ENCODE measurements at regions of chr2 and their contacts with region 1.

Region 1: DNA sequence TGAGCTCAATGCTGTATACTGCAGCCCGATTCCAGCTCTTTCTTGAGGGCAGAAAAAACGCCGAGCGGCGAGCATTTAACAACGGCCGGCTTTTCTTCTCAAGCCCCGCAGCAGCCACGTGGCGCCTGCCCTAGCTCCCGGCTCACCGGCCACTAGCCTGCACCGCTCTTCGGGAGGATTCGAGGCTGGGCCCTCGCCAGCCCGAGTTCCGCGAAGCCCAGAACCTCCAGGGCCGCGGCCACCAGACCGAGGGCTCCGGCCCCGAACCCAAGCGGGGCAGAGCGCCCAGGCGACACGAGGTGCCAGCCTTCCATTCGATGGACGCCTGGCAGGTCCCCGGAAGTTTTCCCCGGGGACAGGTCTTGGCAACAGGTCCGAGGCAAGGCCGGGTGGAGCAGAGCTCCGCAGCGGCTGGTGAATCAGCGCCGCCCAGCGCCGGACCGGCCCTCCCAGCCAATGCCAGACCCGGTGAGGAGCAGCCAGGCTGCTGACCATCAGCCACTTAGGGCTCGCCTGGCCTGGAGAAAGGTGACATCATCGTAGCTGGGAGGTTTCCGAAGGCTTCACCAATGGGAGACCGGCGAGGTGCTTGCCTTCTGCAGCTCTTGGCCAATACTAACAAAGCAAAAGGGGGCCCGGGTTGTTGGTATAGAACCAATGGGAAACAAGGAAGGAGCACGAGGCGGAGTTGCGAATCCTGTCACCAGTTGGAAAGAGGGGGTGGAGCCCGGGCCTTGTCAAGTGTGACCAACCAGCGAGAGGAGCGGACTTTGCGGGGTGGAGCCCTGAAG is 544 bp upstream of the MXD1 start:
- DNase-seq: peak; percentile 99 to 100 (median 100)
- H3K4me3 ChIP-seq: peak overlapping the region; percentile 81 to 88
- H3K4me3 Mint-ChIP-seq: peak overlapping the region; percentile 85 to 89 (median 87)
- H3K27ac ChIP-seq: peak overlapping the region; percentile 96
- H3K27ac Mint-ChIP-seq: peak overlapping the region; percentile 90 to 96 (median 94)
- H3K4me1 ChIP-seq: peaks cover 30% of the 10 kb centered on the region
- H3K4me1 Mint-ChIP-seq: peaks cover 7 to 44% (median 19%) of the 10 kb centered on the region in 4 donors
- H3K27me3 ChIP-seq: no peaks in the 10 kb centered on the region
- H3K27me3 Mint-ChIP-seq: no peaks in the 10 kb centered on the region

Region 2: DNA sequence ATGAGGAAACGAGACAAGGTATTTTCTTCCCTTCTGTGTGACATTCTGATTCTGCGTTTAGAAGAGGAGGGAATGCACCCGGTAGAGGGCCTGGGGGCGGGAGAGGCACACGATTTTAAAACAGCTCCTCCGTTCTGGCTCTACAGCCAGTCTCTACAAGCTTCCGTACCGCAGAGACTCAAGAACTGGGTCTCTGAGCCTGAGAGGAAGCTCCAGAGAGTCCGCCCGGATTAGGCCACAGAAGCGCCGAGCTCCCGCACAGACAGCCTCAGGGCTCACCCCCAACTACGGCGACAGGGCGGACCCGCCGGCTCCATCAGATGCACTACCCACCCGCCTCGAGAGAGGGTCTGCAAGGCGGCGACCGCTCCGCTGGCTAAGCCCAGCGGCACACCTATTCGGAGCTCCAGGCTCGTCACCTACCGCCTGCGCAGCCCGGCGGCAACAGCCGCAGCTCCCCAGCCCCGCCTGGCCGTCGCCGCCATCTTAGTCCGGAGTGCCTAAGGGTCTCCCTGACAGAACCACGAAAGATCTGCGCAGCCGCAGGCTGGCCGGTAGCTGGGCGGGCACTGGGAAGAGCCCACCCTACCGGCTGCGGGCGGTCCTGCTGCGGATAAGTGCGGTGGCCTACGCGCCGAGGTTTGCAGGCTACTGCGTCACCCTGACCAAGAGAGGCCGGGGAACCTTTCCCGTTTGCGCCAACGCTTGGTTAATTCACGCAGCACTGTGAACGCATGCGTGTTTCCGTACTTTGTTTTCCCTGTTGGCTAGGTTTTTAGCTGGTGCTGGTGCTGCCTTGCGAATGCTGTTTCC is 477.2 kb before region 1 on chr2 and contains the start of gene NFU1:
- CTCF ChIA-PET with region 1: interaction called, 3 read pairs
- POLR2A ChIA-PET with region 1: interaction called, 10 read pairs
- intact Hi-C with region 1: no loop called
- DNase-seq: peak; percentile 85 to 91 (median 89)
- H3K4me3 ChIP-seq: peak within 1 kb of the TSS; percentile 75 to 82
- H3K4me3 Mint-ChIP-seq: peak within 1 kb of the TSS; percentile 93 to 99 (median 98)
- H3K27ac ChIP-seq: peak within 1 kb of the TSS; percentile 91
- H3K27ac Mint-ChIP-seq: peak within 1 kb of the TSS; percentile 98 to 100 (median 99)
- H3K4me1 ChIP-seq: peaks cover 32% of the 10 kb centered on the region
- H3K4me1 Mint-ChIP-seq: peaks cover 26 to 48% (median 34%) of the 10 kb centered on the region in 4 donors
- H3K27me3 ChIP-seq: no peaks in the 10 kb centered on the region
- H3K27me3 Mint-ChIP-seq: no peaks in the 10 kb centered on the region
- total RNA-seq, gene NFU1: 23.9 to 27.0 TPM

Region 3: GRCh38 chr2:69704446-69704845 is 209.9 kb before region 1 on chr2:
- CTCF ChIA-PET with region 1: no interaction called
- POLR2A ChIA-PET with region 1: no interaction called
- intact Hi-C with region 1: no loop called
- DNase-seq: no peak
- H3K4me3 ChIP-seq: no peak overlapping the region
- H3K4me3 Mint-ChIP-seq: no peak overlapping the region
- H3K27ac ChIP-seq: no peak overlapping the region
- H3K27ac Mint-ChIP-seq: no peak overlapping the region
- H3K4me1 ChIP-seq: peaks cover under 1% of the 10 kb centered on the region
- H3K4me1 Mint-ChIP-seq: peaks cover 9 to 15% (median 9%) of the 10 kb centered on the region in 4 donors
- H3K27me3 ChIP-seq: no peaks in the 10 kb centered on the region
- H3K27me3 Mint-ChIP-seq: no peaks in the 10 kb centered on the region

Region 4: GRCh38 chr2:70062268-70062667 is 147.9 kb after region 1 on chr2:
- CTCF ChIA-PET with region 1: interaction called, 81 read pairs
- POLR2A ChIA-PET with region 1: interaction called, 129 read pairs
- intact Hi-C with region 1: no loop called
- DNase-seq: no peak
- H3K4me3 ChIP-seq: no peak overlapping the region
- H3K4me3 Mint-ChIP-seq: no peak overlapping the region
- H3K27ac ChIP-seq: no peak overlapping the region
- H3K27ac Mint-ChIP-seq: peak overlapping the region in 2 of 7 donors; percentile 46 to 55
- H3K4me1 ChIP-seq: peaks cover 10% of the 10 kb centered on the region
- H3K4me1 Mint-ChIP-seq: peaks cover 9 to 24% (median 17%) of the 10 kb centered on the region in 4 donors
- H3K27me3 ChIP-seq: no peaks in the 10 kb centered on the region
- H3K27me3 Mint-ChIP-seq: no peaks in the 10 kb centered on the region

Region 5: GRCh38 chr2:70086838-70087701 is 172.7 kb after region 1 on chr2 and contains the start of gene PCBP1:
- CTCF ChIA-PET with region 1: interaction called, 51 read pairs
- POLR2A ChIA-PET with region 1: interaction called, 207 read pairs
- intact Hi-C with region 1: loop called (anchors 1 kb)
- DNase-seq: peak; percentile 93 to 99 (median 97)
- H3K4me3 ChIP-seq: peak within 1 kb of the TSS; percentile 74 to 84
- H3K4me3 Mint-ChIP-seq: peak within 1 kb of the TSS; percentile 93 to 99 (median 96)
- H3K27ac ChIP-seq: peak within 1 kb of the TSS; percentile 99
- H3K27ac Mint-ChIP-seq: peak within 1 kb of the TSS; percentile 99 to 100 (median 100)
- H3K4me1 ChIP-seq: peaks cover 68% of the 10 kb centered on the region
- H3K4me1 Mint-ChIP-seq: peaks cover 47 to 93% (median 59%) of the 10 kb centered on the region in 4 donors
- H3K27me3 ChIP-seq: no peaks in the 10 kb centered on the region
- H3K27me3 Mint-ChIP-seq: peaks cover 3% of the 10 kb centered on the region in 2 donors
- total RNA-seq, gene PCBP1: 372 to 383 TPM

Region 6: GRCh38 chr2:70124983-70125480 is 210.7 kb after region 1 on chr2:
- CTCF ChIA-PET with region 1: interaction called, 4 read pairs
- POLR2A ChIA-PET with region 1: interaction called, 81 read pairs
- intact Hi-C with region 1: no loop called
- DNase-seq: peak in 2 of 5 donors; percentile 75 to 82
- H3K4me3 ChIP-seq: peak overlapping the region; percentile 29 to 99
- H3K4me3 Mint-ChIP-seq: peak overlapping the region; percentile 89 to 99 (median 94)
- H3K27ac ChIP-seq: peak overlapping the region; percentile 97
- H3K27ac Mint-ChIP-seq: peak overlapping the region; percentile 95 to 100 (median 100)
- H3K4me1 ChIP-seq: peaks cover 64% of the 10 kb centered on the region
- H3K4me1 Mint-ChIP-seq: peaks cover 34 to 73% (median 57%) of the 10 kb centered on the region in 4 donors
- H3K27me3 ChIP-seq: no peaks in the 10 kb centered on the region
- H3K27me3 Mint-ChIP-seq: peaks cover 0 to 3% of the 10 kb centered on the region in 2 donors

Region 7: DNA sequence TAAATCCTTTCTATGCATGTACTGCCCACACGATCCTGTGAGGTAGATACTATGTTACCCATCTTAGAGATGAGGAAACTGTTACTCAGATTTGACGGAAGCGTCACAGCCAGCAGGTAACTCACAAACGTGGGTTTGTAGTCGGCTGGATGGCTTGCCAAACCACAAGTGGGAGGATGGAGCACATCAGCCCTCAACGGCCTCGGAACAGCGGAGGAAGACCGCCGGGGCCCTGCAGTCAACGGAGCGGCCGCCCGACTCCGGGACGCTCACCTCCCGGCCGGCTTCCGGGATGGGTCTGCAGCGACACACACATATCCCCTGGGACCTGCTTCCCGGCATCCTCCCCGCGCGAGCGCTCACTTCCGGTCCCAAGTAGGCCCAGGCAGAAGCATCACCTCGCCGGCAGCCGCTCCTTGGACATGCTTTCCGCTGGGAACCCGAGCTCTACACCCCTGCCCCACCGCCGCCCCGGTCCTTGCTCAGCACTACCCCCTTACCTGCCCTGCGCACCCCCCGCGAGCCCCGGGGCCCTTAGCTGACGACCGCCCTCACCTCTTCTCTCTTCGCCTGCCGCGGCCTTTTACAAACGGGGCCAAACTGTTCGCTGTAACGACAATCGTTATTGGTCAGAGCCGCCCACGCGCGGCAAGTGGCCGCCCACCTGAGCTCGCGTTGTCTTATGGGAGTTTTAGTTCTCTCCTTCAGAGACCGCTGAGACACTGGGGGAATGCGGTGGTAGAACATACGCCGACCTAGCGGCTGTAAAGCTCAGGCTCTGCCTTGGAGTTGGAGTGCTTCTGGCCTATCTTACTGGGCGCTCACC is 276.3 kb after region 1 on chr2 and contains the start of gene C2orf42:
- CTCF ChIA-PET with region 1: interaction called, 35 read pairs
- POLR2A ChIA-PET with region 1: interaction called, 85 read pairs
- intact Hi-C with region 1: loop called (anchors 1 kb)
- DNase-seq: peak; percentile 96 to 97 (median 97)
- H3K4me3 ChIP-seq: peak within 1 kb of the TSS; percentile 93 to 96
- H3K4me3 Mint-ChIP-seq: peak within 1 kb of the TSS; percentile 90 to 98 (median 96)
- H3K27ac ChIP-seq: peak within 1 kb of the TSS; percentile 81
- H3K27ac Mint-ChIP-seq: peak within 1 kb of the TSS; percentile 98 to 100 (median 99)
- H3K4me1 ChIP-seq: peaks cover 15% of the 10 kb centered on the region
- H3K4me1 Mint-ChIP-seq: peaks cover 15 to 25% (median 20%) of the 10 kb centered on the region in 4 donors
- H3K27me3 ChIP-seq: no peaks in the 10 kb centered on the region
- H3K27me3 Mint-ChIP-seq: peaks cover 0 to 1% of the 10 kb centered on the region in 2 donors
- total RNA-seq, gene C2orf42: 36.7 to 47.9 TPM

Region 8: DNA sequence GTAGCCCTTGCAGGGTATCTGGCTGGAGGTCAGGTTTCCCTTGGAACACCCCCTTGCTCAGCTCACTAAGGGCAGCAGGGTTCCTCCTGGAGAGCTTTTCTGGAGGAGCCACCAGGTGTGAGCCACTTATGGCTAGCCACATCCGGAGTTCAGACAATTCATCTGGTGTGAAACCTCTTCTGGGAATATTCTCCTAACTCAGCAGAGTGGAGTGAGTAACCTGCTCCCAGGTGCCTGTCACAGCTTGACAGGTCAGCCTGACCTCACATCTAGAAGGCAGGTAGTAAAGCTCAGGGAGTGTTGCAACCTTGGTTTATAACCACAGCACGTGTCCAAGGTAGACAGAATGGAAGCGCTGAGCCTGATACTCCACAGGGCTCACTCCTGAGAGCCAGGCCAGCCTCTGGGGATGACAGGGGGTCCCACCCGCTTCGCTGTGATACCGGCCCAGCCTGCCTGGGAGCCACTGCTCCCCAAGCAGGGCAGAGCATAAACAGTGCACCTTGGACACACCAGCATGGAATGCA is 701.9 kb after region 1 on chr2:
- CTCF ChIA-PET with region 1: no interaction called
- POLR2A ChIA-PET with region 1: no interaction called
- intact Hi-C with region 1: loop called (anchors 10 kb)
- DNase-seq: no peak
- H3K4me3 ChIP-seq: no peak overlapping the region
- H3K4me3 Mint-ChIP-seq: no peak overlapping the region
- H3K27ac ChIP-seq: no peak overlapping the region
- H3K27ac Mint-ChIP-seq: no peak overlapping the region
- H3K4me1 ChIP-seq: no peaks in the 10 kb centered on the region
- H3K4me1 Mint-ChIP-seq: no peaks in the 10 kb centered on the region
- H3K27me3 ChIP-seq: no peaks in the 10 kb centered on the region
- H3K27me3 Mint-ChIP-seq: peaks cover 4 to 19% of the 10 kb centered on the region in 2 donors